Activated T-helper 2 cell treated with anti-CD3 and anti-CD28 coated beads, Interferon-gamma antibody, Interleukin-2, Interleukin-4, amounts not matched to agents 10 μg/mL and 5 μg/mL and 100 μg/mL, durations not matched to agents 14 hours and 24 hours and 36 hours (primary cell): ENCODE measurements at regions of chr10 and their contacts with region 1.

Region 1: DNA sequence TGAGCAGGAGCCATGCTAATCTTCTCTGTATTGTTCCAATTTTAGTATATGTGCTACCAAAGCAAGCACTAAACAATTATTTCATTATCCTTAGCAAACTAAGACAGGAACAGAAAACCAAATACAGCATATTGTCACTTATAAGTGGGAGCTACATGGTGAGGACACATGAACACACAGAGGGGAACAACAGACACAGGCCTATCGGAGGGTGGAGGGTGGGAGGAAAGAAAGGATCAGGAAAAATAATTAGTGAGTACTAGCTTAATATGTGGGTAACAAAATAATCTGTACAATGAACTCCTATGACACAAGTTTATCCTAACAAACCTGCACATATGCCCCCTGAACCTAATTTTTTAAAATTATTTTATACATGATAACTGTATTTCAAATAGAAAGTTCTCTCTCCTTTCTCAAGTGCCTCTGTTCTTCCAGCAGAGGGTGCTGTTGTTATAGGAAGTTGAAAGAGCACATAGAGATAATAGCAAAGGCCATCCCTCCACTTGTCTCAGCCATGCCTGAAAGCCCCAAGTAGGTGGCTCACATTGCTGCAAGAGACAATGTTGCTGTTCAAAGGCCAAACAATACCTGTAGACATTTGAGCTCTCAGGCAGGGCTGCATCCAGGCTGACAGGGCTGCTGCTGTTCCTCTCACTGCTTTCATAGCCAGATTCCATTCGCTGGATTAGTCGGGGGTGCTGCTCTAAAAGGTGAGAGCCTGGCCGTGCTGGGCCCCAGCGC is 33.4 kb upstream of the PPP3CB start:
- DNase-seq: peak; percentile 25
- H3K4me3 Mint-ChIP-seq: no peak overlapping the region
- H3K27ac Mint-ChIP-seq: no peak overlapping the region
- H3K4me1 Mint-ChIP-seq: no peaks in the 10 kb centered on the region
- H3K27me3 Mint-ChIP-seq: peaks cover 6% of the 10 kb centered on the region

Region 2: DNA sequence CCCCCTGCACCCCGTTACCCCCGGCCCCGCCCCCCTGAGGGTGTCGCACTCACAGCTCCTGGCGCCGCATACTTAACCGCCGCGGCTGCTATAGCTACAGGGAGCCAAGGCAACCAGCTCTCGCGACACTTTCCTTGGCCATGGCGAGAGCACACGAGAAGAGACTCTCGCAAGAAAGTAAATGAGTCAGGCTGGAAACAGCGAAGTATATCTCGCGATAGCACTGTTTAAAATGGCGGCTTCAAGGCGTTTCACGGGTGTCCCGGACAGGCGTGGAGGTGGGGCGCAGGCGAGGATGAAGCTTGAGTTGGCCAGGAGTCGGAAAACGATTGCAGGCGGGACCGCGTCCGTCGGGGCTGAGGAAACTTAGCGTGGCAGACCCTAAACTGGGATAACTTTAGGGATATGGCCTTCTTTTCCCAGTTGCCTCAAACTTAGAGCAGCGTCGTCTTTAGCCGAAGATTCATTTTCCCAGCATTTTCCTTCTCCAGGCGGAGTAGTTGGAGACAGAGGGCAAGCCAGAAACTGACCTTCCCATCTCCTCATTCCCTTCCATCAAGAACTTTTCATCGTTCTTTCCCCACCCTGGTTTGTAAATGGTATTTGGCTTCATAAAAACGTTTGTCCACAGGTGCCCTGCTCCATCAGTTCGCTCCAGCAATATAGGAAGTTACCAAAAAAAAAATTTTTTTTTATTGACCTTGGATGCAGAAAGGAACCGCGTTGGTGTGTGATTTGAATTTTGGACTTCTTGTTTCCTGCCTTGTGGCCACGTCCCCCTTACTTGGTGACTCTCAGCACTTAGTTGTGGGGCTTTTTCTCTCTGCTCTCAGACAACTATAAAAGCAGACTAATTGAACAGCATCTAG is 96.9 kb after region 1 on chr10:
- intact Hi-C with region 1: loop called (anchors 5 kb)
- DNase-seq: peak; percentile 91
- H3K4me3 Mint-ChIP-seq: peak overlapping the region; percentile 96
- H3K27ac Mint-ChIP-seq: peak overlapping the region; percentile 96
- H3K4me1 Mint-ChIP-seq: peaks cover 11% of the 10 kb centered on the region
- H3K27me3 Mint-ChIP-seq: no peaks in the 10 kb centered on the region